Activated T-helper 1 cell treated with anti-CD3 and anti-CD28 coated beads, Interleukin-12 subunit alpha, Interleukin-12 subunit beta, Interleukin-2, Interleukin-4 antibody, amounts not matched to agents 30 ng/mL and 10 ng/mL and 1 ng/mL, durations not matched to agents 14 hours and 24 hours and 36 hours (primary cell): ENCODE measurements at regions of chr15 and their contacts with region 1.

Region 1: GRCh38 chr15:40564591-40565332 is at the start of gene CCDC32:
- DNase-seq: peak; percentile 96
- H3K4me3 Mint-ChIP-seq: peak within 1 kb of the TSS; percentile 96
- H3K27ac Mint-ChIP-seq: peak within 1 kb of the TSS; percentile 96
- H3K4me1 Mint-ChIP-seq: peaks cover 43% of the 10 kb centered on the region
- H3K27me3 Mint-ChIP-seq: no peaks in the 10 kb centered on the region
- total RNA-seq, gene CCDC32: 28.4 and 36.9 TPM in 2 replicates

Region 2: GRCh38 chr15:40421246-40422157 is 143.3 kb before region 1 on chr15:
- intact Hi-C with region 1: no loop called
- DNase-seq: peak; percentile 72
- H3K4me3 Mint-ChIP-seq: no peak overlapping the region
- H3K27ac Mint-ChIP-seq: no peak overlapping the region
- H3K4me1 Mint-ChIP-seq: no peaks in the 10 kb centered on the region
- H3K27me3 Mint-ChIP-seq: no peaks in the 10 kb centered on the region

Region 3: GRCh38 chr15:40440743-40441564 is 123.8 kb before region 1 on chr15 and contains the start of gene BAHD1:
- intact Hi-C with region 1: loop called (anchors 2 kb)
- DNase-seq: peak; percentile 96
- H3K4me3 Mint-ChIP-seq: peak within 1 kb of the TSS; percentile 95
- H3K27ac Mint-ChIP-seq: peak within 1 kb of the TSS; percentile 87
- H3K4me1 Mint-ChIP-seq: peaks cover 26% of the 10 kb centered on the region
- H3K27me3 Mint-ChIP-seq: peaks cover 53% of the 10 kb centered on the region
- total RNA-seq, gene BAHD1: 26.5 and 26.9 TPM in 2 replicates

Region 4: DNA sequence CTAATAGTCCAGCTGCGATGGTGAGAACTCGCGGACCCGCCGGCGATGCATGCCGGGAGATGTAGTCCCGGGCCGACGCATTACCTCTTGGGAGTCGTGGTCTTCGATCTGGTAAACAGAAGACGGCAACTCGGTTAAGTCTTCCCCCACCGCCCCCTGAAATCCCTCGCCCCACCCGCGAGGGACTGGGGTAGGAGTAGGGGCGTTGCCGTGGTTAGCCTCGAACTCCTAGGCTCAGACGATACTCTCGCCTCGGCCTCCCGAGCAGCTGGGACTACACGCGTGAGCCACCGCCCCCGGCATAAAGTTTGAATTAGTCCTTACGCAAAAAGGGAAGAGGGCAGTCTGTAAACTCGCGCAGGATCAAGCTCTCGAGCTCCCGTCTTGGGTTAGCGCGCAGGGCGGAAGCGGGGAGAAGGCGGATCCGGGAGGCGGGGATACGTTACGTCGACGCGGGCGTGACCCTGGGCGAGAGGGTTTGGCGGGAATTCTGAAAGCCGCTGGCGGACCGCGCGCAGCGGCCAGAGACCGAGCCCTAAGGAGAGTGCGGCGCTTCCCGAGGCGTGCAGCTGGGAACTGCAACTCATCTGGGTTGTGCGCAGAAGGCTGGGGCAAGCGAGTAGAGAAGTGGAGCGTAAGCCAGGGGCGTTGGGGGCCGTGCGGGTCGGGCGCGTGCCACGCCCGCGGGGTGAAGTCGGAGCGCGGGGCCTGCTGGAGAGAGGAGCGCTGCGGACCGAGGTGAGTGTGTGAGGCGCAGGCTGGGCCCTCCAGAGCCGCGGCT is 130.1 kb after region 1 on chr15 and contains the start of gene RAD51:
- intact Hi-C with region 1: loop called (anchors 1 kb)
- DNase-seq: peak; percentile 91
- H3K4me3 Mint-ChIP-seq: peak within 1 kb of the TSS; percentile 96
- H3K27ac Mint-ChIP-seq: peak within 1 kb of the TSS; percentile 91
- H3K4me1 Mint-ChIP-seq: peaks cover 41% of the 10 kb centered on the region
- H3K27me3 Mint-ChIP-seq: no peaks in the 10 kb centered on the region
- total RNA-seq, gene RAD51: 62.0 and 62.4 TPM in 2 replicates

Region 5: DNA sequence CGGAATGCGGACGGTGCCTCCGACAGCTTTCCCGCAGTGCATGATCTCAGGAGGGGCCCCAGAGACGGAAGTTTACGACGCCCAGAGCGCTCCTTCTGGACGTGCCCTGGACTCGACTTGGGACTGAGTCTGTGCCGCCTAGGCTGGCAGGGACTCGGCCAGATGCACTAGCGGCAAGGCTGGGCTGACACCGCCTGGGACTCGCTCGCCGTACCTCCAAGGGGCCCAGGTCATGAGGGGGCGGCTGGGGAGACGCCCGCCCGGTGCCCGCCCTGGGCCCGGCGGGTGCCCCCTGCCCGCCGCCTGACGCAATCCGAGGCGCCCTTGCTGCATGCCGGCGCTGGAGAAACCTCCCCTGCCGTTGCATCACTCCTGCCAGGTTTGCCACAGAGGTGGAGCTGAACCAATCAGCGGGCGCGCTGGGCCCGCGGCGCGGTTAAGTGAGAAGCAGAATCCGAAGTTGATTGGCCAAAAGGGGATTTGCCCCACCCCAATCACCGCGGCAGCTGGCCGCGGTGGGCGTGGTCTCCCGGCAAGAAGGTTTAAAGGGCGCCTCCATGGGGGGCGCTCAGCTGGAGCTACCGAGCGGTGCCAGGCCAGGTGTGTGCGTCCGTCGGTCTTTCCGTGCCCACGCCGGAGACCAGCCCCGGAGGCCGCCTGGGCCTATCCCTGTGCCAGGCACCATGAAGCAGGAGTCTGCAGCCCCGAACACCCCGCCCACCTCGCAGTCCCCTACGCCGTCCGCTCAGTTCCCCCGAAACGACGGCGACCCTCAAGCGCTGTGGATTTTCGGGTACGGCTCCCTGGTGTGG is 388.3 kb after region 1 on chr15 and contains the start of gene CHAC1:
- intact Hi-C with region 1: loop called (anchors 1 kb)
- DNase-seq: peak; percentile 96
- H3K4me3 Mint-ChIP-seq: peak within 1 kb of the TSS; percentile 92
- H3K27ac Mint-ChIP-seq: peak within 1 kb of the TSS; percentile 89
- H3K4me1 Mint-ChIP-seq: peaks cover 48% of the 10 kb centered on the region
- H3K27me3 Mint-ChIP-seq: no peaks in the 10 kb centered on the region
- total RNA-seq, gene CHAC1: 11.7 and 12.4 TPM in 2 replicates

Region 6: DNA sequence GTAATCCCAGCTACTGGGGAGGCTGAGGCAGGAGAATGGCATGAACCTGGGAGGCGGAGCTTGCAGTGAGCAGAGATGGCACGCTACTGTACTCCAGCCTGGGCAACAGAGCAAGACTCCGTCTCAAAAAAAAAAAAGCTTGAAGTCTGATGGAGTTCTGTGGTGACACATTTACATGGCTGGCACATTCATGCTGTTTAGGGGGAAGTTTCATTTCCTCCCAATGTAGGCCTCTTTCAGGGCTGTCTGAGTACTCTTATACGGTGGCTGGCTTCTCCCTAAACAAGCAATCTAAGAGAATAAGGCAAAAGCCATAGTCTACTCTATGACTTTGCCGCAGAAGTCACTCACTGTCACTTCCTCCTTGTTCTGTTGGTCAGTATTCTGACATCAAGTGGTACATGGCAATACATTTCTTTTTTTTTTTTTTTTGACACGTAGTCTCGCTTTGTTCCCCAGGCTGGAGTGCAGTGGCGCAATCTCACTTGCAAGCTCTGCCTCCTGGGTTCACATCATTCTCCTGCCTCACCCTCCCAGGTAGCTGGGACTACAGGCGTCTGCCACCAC is 726.4 kb after region 1 on chr15:
- intact Hi-C with region 1: no loop called
- DNase-seq: no peak
- H3K4me3 Mint-ChIP-seq: no peak overlapping the region
- H3K27ac Mint-ChIP-seq: no peak overlapping the region
- H3K4me1 Mint-ChIP-seq: peaks cover 39% of the 10 kb centered on the region
- H3K27me3 Mint-ChIP-seq: no peaks in the 10 kb centered on the region